IMR-90 (cell line): ENCODE measurements at regions of chr7 and their contacts with region 1.

Region 1: GRCh38 chr7:24483804-24484203 is 89.4 kb upstream of the PALS2 start:
- DNase-seq: no peak
- ATAC-seq: no peak
- H3K4me3 ChIP-seq: no peak overlapping the region
- H3K27ac ChIP-seq: no peak overlapping the region
- H3K4me1 ChIP-seq: 0 out of 2 replicates have a peak, but pooled peaks cover under 1% of the 10 kb centered on the region
- H3K27me3 ChIP-seq: peaks cover 3% of the 10 kb centered on the region; the same call in 1 of the 2 replicates
- CTCF ChIP-seq: no peak
- POLR2A ChIP-seq: no peak
- RAD21 ChIP-seq: no peak

Region 2: GRCh38 chr7:24504040-24504439 is 20.2 kb after region 1 on chr7:
- CTCF ChIA-PET with region 1: no interaction called
- POLR2A ChIA-PET with region 1: interaction called, 18 read pairs
- dilution Hi-C with region 1: no loop called
- in situ Hi-C with region 1: no loop called
- intact Hi-C with region 1: no loop called
- DNase-seq: no peak
- ATAC-seq: no peak
- H3K4me3 ChIP-seq: no peak overlapping the region
- H3K27ac ChIP-seq: no peak overlapping the region
- H3K4me1 ChIP-seq: no peaks in the 10 kb centered on the region
- H3K27me3 ChIP-seq: peaks cover 9% of the 10 kb centered on the region
- CTCF ChIP-seq: no peak
- POLR2A ChIP-seq: no peak
- RAD21 ChIP-seq: no peak

Region 3: GRCh38 chr7:24609059-24609458 is 125.3 kb after region 1 on chr7:
- CTCF ChIA-PET with region 1: no interaction called
- POLR2A ChIA-PET with region 1: no interaction called
- dilution Hi-C with region 1: no loop called
- in situ Hi-C with region 1: no loop called
- intact Hi-C with region 1: no loop called
- DNase-seq: no peak
- ATAC-seq: no peak
- H3K4me3 ChIP-seq: no peak overlapping the region
- H3K27ac ChIP-seq: no peak overlapping the region
- H3K4me1 ChIP-seq: no peaks in the 10 kb centered on the region; the same call in 1 of the 2 replicates
- H3K27me3 ChIP-seq: no peaks in the 10 kb centered on the region
- CTCF ChIP-seq: no peak
- POLR2A ChIP-seq: no peak
- RAD21 ChIP-seq: no peak